ENCODE measurements at regions of chr2 and their contacts with region 1.

Region 1: DNA sequence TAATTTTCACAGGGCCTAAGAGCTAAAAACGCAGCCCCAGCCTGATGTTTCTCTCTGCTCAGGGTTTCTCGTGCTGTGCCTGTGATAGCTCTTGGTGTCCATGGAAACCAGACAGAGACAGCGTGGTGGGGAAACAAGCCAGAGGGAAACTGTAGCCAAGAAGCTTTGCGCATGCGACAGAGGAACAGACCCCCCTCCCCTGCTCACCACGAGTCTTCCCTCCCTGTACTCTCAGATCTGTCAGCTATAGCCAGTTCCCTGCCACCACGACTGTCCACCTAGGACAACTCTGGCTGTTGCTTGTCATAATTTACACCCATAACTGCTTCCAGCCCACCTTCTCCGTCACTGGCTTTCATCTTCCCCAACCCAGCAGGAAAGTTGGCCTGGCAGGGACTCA is 13.2 kb upstream of the DNAJC27 start:
- DNase-seq: peak in 4 of 5 donors; percentile 61 to 80 (median 74)
- ATAC-seq: peak; percentile 74 to 95 (median 94)
- H3K4me3 ChIP-seq: no peak overlapping the region
- H3K27ac ChIP-seq: peak overlapping the region; percentile 14 to 76 (median 62)
- H3K4me1 ChIP-seq: peaks cover 0 to 27% (median 18%) of the 10 kb centered on the region in 12 donors
- H3K27me3 ChIP-seq: no peaks in the 10 kb centered on the region
- CTCF ChIP-seq: no peak
- POLR2A ChIP-seq: no peak

Region 2: DNA sequence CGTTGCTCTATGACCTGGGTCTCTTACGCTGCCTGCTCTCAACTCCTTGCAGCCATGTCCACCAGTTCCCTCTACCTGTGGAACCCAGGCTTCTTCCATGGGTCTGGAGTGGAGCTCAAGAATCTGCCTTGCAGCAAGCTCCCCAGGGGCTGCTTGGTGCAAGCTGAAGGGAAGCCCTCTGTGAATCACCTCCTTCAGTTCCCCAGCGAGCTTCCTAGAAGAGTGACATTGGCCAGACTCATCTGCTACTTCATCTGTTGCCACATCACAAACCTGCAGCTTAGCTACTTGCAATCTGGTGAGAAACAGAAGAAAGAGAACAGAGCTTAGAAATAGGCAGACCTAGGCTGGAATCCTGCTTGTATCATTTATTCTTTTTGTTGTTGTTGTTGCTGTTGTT is 47.2 kb after region 1 on chr2:
- intact Hi-C with region 1: loop called in 1 of 10 experiments (anchors 5 kb)
- DNase-seq: no peak
- ATAC-seq: no peak
- H3K4me3 ChIP-seq: no peak overlapping the region
- H3K27ac ChIP-seq: no peak overlapping the region
- H3K4me1 ChIP-seq: peaks cover 0 to 3% (median 0%) of the 10 kb centered on the region in 12 donors
- H3K27me3 ChIP-seq: no peaks in the 10 kb centered on the region
- CTCF ChIP-seq: no peak
- POLR2A ChIP-seq: no peak

Region 3: DNA sequence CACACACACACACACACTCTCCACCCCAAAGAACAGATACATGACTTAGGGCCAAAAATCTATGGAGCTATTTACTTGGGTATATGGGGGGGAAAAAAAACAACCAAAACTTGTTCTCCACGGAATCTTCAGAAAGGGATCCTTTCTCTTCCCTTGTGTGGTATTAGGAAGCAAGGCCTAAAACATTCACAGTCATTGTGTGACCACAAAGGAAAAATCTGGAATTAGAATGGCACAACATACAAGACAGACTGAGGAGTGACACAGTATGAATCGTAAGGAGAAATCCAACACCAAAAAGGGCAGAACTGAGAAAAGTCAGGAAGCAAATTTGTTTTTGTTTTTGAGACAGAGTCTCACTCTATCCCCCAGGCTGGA is 823.1 kb after region 1 on chr2:
- intact Hi-C with region 1: no loop called
- DNase-seq: no peak
- ATAC-seq: no peak
- H3K4me3 ChIP-seq: no peak overlapping the region
- H3K27ac ChIP-seq: no peak overlapping the region
- H3K4me1 ChIP-seq: peaks cover 0 to 11% (median 0%) of the 10 kb centered on the region in 12 donors
- H3K27me3 ChIP-seq: no peaks in the 10 kb centered on the region
- CTCF ChIP-seq: no peak
- POLR2A ChIP-seq: no peak

Measured in heart left ventricle (tissue), 16 donors.